A673 (cell line): ENCODE measurements at regions of chr7 and their contacts with region 1.

Region 1: GRCh38 chr7:83976295-83976694 is 218.3 kb downstream of the SEMA3A start:
- DNase-seq: peak; percentile 80
- H3K4me3 ChIP-seq: no peak overlapping the region
- H3K27ac ChIP-seq: no peak overlapping the region
- H3K4me1 ChIP-seq: peaks cover 33% of the 10 kb centered on the region
- H3K27me3 ChIP-seq: no peaks in the 10 kb centered on the region
- CTCF ChIP-seq: peak; percentile 73

Region 2: DNA sequence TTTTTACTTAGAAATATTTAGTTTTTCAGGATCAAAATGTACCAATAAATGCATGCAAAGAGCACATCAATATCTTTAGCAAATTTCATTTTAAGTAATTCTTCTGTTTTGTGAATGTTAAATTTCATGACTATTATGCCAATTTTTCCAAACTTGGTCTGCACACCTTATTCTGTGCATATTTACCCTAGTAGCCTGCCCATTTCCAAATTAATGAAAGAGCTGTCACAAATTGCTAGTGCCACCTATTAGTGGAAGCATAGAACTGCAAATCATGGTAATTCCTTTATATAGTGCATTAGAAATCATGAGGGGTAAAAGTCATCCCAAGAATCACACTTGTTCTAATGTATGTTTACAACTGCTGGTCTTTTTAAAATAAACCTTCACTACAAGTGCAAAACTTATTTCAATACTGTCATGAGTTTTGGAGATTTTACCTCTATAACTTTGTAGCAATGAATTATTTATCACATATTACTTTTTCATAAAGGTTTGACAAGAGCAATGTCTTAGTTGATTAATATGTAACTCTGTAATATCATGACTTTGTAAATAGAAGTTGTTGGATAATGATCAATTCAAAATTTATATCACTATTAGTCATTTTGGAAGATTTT is 212.6 kb after region 1 on chr7:
- CTCF ChIA-PET with region 1: no interaction called
- POLR2A ChIA-PET with region 1: no interaction called
- intact Hi-C with region 1: loop called (anchors 2 kb)
- DNase-seq: peak; percentile 78
- H3K4me3 ChIP-seq: no peak overlapping the region
- H3K27ac ChIP-seq: no peak overlapping the region
- H3K4me1 ChIP-seq: peaks cover 47% of the 10 kb centered on the region
- H3K27me3 ChIP-seq: no peaks in the 10 kb centered on the region
- CTCF ChIP-seq: peak; percentile 79

Region 3: DNA sequence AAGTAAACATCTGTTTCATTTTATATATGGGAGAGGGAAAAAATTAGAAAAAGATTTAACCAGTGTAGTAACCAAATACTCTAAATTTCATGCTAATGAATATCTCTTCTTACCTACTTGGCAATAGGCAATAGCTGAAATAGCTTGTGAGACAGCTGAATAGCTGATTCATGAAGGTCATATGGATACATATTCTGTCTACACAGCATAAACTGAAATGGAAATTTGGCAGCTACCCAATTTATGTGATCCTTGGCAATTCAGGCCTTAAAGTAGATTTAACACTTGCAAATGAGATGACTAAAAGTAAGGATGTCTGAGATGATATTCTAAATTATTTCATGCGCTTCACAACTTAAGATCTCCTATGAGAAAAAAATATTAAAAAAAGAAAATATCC is 479.5 kb after region 1 on chr7:
- CTCF ChIA-PET with region 1: no interaction called
- POLR2A ChIA-PET with region 1: no interaction called
- intact Hi-C with region 1: loop called (anchors 5 kb)
- DNase-seq: peak; percentile 59
- H3K4me3 ChIP-seq: no peak overlapping the region
- H3K27ac ChIP-seq: no peak overlapping the region
- H3K4me1 ChIP-seq: peaks cover 15% of the 10 kb centered on the region
- H3K27me3 ChIP-seq: no peaks in the 10 kb centered on the region
- CTCF ChIP-seq: no peak

Region 4: GRCh38 chr7:85023045-85023712 is 1046.9 kb after region 1 on chr7:
- CTCF ChIA-PET with region 1: no interaction called
- POLR2A ChIA-PET with region 1: no interaction called
- intact Hi-C with region 1: loop called (anchors 1 kb)
- DNase-seq: peak; percentile 76
- H3K4me3 ChIP-seq: no peak overlapping the region
- H3K27ac ChIP-seq: no peak overlapping the region
- H3K4me1 ChIP-seq: no peaks in the 10 kb centered on the region
- H3K27me3 ChIP-seq: no peaks in the 10 kb centered on the region
- CTCF ChIP-seq: peak; percentile 70